Right ventricle myocardium inferior (tissue), 1 donor: ENCODE measurements at regions of chr5 and their contacts with region 1.

Region 1: GRCh38 chr5:180831139-180832048 is 28.8 kb upstream of the MGAT1 start:
- DNase-seq: peak; percentile 96
- ATAC-seq: peak; percentile 99

Region 2: GRCh38 chr5:180810210-180810958 is 21.0 kb before region 1 on chr5:
- intact Hi-C with region 1: loop called (anchors 2 kb)
- DNase-seq: peak; percentile 98
- ATAC-seq: peak; percentile 96

Region 3: DNA sequence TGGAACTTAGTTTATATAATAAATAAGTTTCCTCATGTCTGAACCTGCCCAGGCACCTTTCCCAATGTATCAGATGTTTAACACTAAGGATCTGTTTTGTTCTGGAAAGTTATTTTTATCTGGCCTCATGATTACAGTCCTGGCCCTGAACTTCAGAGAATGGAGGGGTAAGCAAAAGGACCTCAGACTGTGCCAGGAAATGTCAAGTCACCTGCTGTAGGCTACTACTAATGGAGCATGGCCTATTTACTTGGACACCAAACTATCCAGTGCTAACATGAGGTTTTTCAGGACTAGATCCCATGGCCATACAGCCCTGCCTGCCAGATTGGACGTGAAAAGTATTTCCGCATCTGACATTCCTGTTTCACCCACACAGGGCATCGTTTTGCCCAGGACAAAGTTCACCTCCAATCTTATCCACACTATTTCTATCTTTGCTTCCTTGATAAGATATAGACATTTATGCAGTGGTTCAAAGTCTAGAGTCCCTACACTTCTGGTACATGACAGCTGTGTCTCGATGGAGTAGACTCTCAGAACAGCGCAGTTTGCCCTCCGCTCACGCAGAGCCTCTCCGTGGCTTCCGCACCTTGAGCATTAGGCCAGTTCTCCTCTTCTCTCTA is 67.3 kb after region 1 on chr5 and contains the start of gene BTNL8:
- intact Hi-C with region 1: no loop called
- DNase-seq: no peak
- ATAC-seq: no peak
- total RNA-seq, gene BTNL8: 0.41 TPM